CD8-positive, alpha-beta memory T cell (primary cell): ENCODE measurements at regions of chr2 and their contacts with region 1.

Region 1: DNA sequence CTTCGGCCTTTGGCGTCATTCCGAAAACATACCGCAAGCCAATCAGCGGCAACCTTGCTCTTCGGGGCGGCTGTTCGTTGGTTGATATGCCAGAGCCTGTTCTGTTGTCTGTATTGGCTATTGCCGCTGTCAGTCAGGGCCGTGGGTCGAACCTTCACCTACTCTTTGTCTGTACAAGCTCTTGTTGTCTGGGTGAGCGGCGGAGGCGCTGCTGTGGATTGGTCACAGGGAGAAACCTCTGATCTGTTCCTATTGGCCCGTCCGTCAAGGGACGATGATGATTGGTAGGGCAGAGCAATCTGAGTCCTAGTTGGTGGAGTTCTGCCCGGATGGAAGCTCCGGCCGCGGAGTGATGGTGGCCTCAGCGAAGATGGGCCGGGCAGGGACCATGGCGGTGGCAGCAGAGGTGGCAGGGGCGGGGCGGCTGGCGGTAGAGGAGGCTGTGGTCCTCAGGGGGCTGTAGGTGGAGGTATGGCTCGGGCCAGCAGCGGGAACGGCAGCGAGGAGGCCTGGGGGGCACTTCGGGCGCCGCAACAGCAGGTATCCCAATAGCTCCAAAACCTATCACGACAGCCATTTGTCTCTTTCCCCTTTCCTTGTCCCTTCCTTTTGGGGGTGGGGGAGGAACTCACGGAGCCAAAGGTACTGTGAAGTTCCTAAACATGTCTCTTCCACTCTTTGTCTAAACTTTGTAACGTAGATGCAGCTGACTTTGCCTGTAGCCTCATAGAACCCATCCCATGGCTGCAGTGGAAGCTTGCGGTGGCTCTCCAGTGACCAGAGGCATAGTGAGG is at the start of gene WBP1:
- DNase-seq: peak; percentile 97 to 100 (median 99)
- H3K4me3 ChIP-seq: peak within 1 kb of the TSS; percentile 90
- H3K4me3 Mint-ChIP-seq: peak within 1 kb of the TSS; percentile 87 to 98 (median 92)
- H3K27ac ChIP-seq: peak within 1 kb of the TSS; percentile 94
- H3K27ac Mint-ChIP-seq: peak within 1 kb of the TSS; percentile 91 to 100 (median 100)
- H3K4me1 ChIP-seq: peaks cover 36% of the 10 kb centered on the region
- H3K4me1 Mint-ChIP-seq: peaks cover 51 to 65% (median 62%) of the 10 kb centered on the region in 3 donors
- H3K27me3 ChIP-seq: no peaks in the 10 kb centered on the region
- H3K27me3 Mint-ChIP-seq: peaks cover 0 to 2% of the 10 kb centered on the region in 2 donors
- total RNA-seq, gene WBP1: 31.2 to 31.6 TPM

Region 2: DNA sequence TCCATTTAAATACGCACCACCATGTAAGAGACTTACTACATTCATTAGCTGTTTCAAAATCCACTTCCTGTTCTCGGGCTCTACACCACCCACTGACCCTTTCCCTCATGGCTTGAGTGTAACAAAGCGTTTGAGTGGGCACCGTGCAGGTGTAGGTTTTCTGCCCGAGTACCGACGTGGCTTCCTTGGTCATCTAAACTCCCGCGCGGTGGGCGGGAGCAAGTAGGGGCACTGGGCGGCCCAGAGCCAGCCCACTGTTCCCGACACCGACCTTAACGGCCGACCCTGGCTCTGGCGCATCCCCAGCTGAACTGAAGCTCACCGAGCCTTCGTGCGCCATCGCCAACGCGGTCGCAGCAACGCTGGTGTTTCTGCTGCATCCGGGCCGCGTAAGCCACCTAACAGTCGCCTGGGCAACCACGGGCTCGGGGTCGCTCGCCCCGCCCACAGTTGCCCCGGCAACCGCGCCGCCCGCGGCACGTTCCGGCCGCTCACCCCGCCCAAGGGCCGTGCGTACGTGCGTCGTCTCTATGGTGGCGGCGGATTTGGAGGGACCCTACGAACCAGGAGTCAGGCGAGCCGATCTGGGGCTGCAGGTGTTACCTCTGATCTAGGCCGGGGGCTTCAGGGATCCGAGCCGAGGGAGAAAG is 37.0 kb before region 1 on chr2 and contains the starts of genes C2orf81 and WDR54:
- CTCF ChIA-PET with region 1: interaction called, 5 read pairs
- POLR2A ChIA-PET with region 1: interaction called, 10 read pairs
- DNase-seq: peak; percentile 88 to 97 (median 96)
- H3K4me3 ChIP-seq: peak within 1 kb of the TSS; percentile 96
- H3K4me3 Mint-ChIP-seq: peak within 1 kb of the TSS; percentile 97 to 100 (median 98)
- H3K27ac ChIP-seq: peak within 1 kb of the TSS; percentile 98
- H3K27ac Mint-ChIP-seq: peak within 1 kb of the TSS; percentile 97 to 100 (median 100)
- H3K4me1 ChIP-seq: peaks cover 16% of the 10 kb centered on the region
- H3K4me1 Mint-ChIP-seq: peaks cover 13 to 26% (median 19%) of the 10 kb centered on the region in 3 donors
- H3K27me3 ChIP-seq: no peaks in the 10 kb centered on the region
- H3K27me3 Mint-ChIP-seq: peaks cover 0 to 7% of the 10 kb centered on the region in 2 donors
- total RNA-seq, gene C2orf81: 2.7 to 3.2 TPM
- total RNA-seq, gene WDR54: 75.5 to 86.6 TPM

Region 3: GRCh38 chr2:74472086-74472944 is 14.0 kb after region 1 on chr2 and contains the start of gene MRPL53:
- CTCF ChIA-PET with region 1: interaction called, 8 read pairs
- POLR2A ChIA-PET with region 1: interaction called, 54 read pairs
- DNase-seq: peak; percentile 94 to 97 (median 95)
- H3K4me3 ChIP-seq: peak within 1 kb of the TSS; percentile 95
- H3K4me3 Mint-ChIP-seq: peak within 1 kb of the TSS; percentile 93 to 98 (median 96)
- H3K27ac ChIP-seq: peak within 1 kb of the TSS; percentile 83
- H3K27ac Mint-ChIP-seq: peak within 1 kb of the TSS; percentile 97 to 100 (median 99)
- H3K4me1 ChIP-seq: peaks cover 22% of the 10 kb centered on the region
- H3K4me1 Mint-ChIP-seq: peaks cover 21 to 27% (median 25%) of the 10 kb centered on the region in 3 donors
- H3K27me3 ChIP-seq: no peaks in the 10 kb centered on the region
- H3K27me3 Mint-ChIP-seq: peaks cover 0 to 5% of the 10 kb centered on the region in 2 donors
- total RNA-seq, gene MRPL53: 115 to 118 TPM